ENCODE measurements at regions of chr7 and their contacts with region 1.

Region 1: DNA sequence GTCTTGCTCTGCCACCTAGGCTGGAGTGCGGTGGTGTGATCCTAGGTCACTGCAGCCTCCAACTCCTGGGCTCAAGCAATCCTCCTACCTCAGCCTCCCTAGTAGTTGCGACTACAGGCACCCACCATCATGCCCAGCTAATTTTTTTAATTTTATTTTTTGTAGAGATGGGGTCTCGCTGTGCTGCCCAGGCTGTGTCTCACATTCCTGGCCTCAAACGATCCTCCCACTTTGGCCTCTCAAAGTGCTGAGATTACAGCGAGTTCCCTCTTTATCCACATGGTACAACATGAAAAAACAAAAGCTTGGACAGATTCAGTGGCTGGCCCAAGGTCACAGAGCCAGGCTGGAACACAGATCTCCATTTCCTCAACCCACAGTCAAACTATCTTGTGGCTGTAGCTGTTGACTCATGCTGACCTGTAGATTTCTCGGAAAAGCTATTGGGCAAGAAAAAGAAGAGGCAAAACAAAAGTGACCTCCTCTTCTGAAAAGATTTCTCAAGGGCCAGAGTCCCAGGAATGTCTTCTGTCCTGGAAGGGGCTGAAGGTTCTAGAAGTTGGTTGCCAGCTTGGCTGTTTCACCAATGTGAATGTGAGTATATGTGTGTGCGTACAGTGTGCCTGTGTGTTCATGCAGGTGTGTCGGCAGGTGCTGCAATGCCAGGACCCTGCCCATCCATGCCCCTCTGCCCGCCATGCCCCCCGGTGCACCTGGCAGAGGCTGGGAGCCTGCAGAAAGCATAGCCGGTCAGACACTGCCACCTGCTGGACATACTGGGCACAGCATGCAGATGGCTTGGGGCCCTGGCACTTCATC is 28.4 kb downstream of the TMEM130 start:
- DNase-seq: peak; percentile 55 to 87 (median 68)
- H3K4me3 ChIP-seq: no peak overlapping the region
- H3K27ac ChIP-seq: peak overlapping the region in 1 of 59 donors; percentile 46
- H3K27me3 ChIP-seq: peaks cover 0 to 10% (median 0%) of the 10 kb centered on the region in 45 donors
- CTCF ChIP-seq: peak in 55 of 56 donors; percentile 93 to 100 (median 98)

Region 2: GRCh38 chr7:98294796-98295382 is 546.5 kb before region 1 on chr7:
- intact Hi-C with region 1: loop called in 1 of 2 experiments (anchors 10 kb)
- DNase-seq: peak in 7 of 10 donors; percentile 31 to 67 (median 45)
- H3K4me3 ChIP-seq: no peak overlapping the region
- H3K27ac ChIP-seq: peak overlapping the region in 2 of 59 donors; percentile 18 to 39
- H3K27me3 ChIP-seq: no peaks in the 10 kb centered on the region
- CTCF ChIP-seq: peak in 55 of 56 donors; percentile 20 to 74 (median 58)

Region 3: DNA sequence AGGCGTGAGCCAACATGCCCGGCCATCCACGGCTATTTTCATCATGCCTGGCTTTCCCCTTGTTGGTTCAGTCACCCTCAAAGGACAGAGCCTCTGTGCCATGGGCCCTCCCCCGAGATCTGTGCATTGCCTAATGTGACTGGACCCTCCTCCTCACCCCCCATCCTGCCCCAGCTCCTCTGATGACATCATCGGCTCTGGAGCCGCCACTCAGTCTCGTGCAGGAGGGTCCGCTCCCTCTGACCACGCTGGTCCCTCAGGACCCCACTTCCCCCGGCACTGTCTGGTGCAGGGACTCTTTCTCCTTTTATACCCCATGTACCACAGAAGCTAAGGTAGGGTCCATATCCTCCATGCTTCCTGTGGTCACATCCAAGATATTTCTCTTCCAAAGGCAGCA is 407.3 kb before region 1 on chr7:
- intact Hi-C with region 1: loop called (anchors 1 kb)
- DNase-seq: no peak
- H3K4me3 ChIP-seq: no peak overlapping the region
- H3K27ac ChIP-seq: no peak overlapping the region
- H3K27me3 ChIP-seq: peaks cover 0 to 3% (median 0%) of the 10 kb centered on the region in 45 donors
- CTCF ChIP-seq: no peak

Region 4: GRCh38 chr7:98753989-98754479 is 87.4 kb before region 1 on chr7:
- intact Hi-C with region 1: loop called in 1 of 2 experiments (anchors 10 kb)
- DNase-seq: peak in 7 of 10 donors; percentile 6 to 72 (median 45)
- H3K4me3 ChIP-seq: peak overlapping the region in 1 of 59 donors; percentile 6
- H3K27ac ChIP-seq: no peak overlapping the region
- H3K27me3 ChIP-seq: peaks cover 0 to 17% (median 0%) of the 10 kb centered on the region in 45 donors
- CTCF ChIP-seq: no peak